Testis (tissue), 5 donors: ENCODE measurements at regions of chr19 and their contacts with region 1.

Region 1: GRCh38 chr19:2027361-2027760 is 11.8 kb upstream of the BTBD2 start:
- DNase-seq: no peak
- H3K4me3 ChIP-seq: no peak overlapping the region
- H3K27ac ChIP-seq: peak overlapping the region in 1 of 2 donors; percentile 41
- H3K4me1 ChIP-seq: peaks cover 17% of the 10 kb centered on the region
- H3K27me3 ChIP-seq: no peaks in the 10 kb centered on the region
- CTCF ChIP-seq: peak in 1 of 3 experiments; percentile 20
- POLR2A ChIP-seq: no peak

Region 2: DNA sequence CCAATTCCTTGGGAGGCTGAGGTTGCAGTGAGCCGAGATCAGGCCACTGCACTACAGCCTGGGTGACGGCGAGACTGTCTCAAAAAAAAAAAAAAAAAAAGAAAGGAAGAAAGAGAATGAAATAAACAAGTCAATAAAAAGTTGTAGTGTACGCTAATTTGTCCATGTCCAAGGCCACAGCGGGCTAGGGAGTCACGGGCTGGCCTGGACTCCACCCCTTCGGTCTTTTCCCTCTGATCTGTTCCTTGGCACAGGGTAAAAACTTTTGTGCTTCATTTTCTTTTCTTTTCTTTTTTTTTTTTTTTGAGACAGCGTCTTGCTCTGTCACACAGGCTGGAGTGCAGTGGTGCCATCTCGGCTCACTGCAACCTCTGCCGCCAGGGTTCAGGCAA is 43.1 kb after region 1 on chr19:
- intact Hi-C with region 1: loop called (anchors 10 kb)
- DNase-seq: peak; percentile 78
- H3K4me3 ChIP-seq: no peak overlapping the region
- H3K27ac ChIP-seq: peak overlapping the region; percentile 64 to 71
- H3K4me1 ChIP-seq: peaks cover 25% of the 10 kb centered on the region
- H3K27me3 ChIP-seq: no peaks in the 10 kb centered on the region
- CTCF ChIP-seq: no peak
- POLR2A ChIP-seq: no peak

Region 3: GRCh38 chr19:2164020-2164998 is 136.9 kb after region 1 on chr19:
- intact Hi-C with region 1: no loop called
- DNase-seq: no peak
- H3K4me3 ChIP-seq: peak overlapping the region; percentile 93 to 94
- H3K27ac ChIP-seq: peak overlapping the region; percentile 97
- H3K4me1 ChIP-seq: peaks cover 45% of the 10 kb centered on the region
- H3K27me3 ChIP-seq: no peaks in the 10 kb centered on the region
- CTCF ChIP-seq: no peak
- POLR2A ChIP-seq: no peak

Region 4: DNA sequence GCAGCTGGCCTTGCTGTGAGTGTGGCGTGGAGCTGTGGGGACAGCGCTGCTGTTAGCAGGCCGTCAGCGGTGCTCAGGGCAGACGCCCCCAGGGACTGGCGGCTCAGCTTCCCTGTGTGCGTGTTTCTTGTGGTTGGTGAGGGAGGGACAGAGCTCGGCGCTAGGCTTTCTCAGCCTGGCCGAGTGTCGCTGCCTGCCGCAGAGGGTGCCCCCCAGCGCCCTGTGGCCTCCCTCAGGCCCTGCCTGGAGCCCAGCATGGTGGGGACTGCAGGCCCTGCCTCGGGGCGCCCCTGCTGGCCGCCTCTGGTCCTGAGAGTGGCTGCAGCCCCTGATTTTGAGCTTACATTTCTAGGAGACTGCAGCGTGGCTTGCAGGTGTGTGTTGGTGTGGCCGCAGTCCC is 171.9 kb after region 1 on chr19:
- intact Hi-C with region 1: no loop called
- DNase-seq: no peak
- H3K4me3 ChIP-seq: no peak overlapping the region
- H3K27ac ChIP-seq: no peak overlapping the region
- H3K4me1 ChIP-seq: no peaks in the 10 kb centered on the region
- H3K27me3 ChIP-seq: no peaks in the 10 kb centered on the region
- CTCF ChIP-seq: no peak
- POLR2A ChIP-seq: no peak